Caco-2 (cell line): ENCODE measurements at regions of chr17 and their contacts with region 1.

Region 1: DNA sequence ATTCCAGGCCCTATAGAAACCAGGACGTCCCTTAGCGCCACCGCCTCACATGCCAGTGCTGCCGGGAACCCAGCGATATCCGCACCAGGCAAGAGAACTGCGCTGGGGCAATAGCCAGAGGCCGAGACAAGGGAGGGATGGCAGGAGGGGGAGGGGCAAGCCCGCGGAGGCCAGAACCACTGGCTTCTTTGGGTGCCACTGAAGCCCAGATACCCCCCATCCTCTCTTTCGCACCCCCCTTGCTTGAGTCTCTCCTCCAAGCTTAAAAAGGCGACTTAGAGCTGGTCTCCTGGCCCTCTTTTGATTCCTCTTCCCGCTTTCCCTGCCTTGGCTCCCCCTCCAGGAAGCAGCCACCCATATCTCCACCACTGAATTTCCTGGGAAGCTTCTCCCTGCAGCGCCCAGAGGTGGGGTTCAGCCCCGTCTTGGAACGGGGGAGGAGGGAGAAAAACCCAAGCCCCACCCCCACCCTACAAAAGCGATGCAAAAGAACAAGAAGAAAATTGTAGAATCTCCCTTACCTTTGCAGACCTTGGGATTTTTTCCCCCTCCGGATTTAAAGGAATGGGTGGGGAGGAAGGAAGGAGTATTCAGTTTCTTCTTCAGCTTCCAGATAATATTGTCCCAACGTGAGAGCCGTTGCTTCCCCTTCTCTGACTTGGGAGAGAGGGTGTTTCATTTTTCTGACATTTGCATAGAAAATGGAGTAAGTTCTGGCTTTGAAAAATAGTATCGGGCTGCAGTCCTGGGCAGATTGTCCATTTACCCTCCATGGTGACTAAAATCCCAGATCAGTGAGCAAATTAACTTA is 622 bp downstream of the HOXB6 start:
- DNase-seq: no peak
- H3K4me3 ChIP-seq: no peak overlapping the region
- H3K4me3 Mint-ChIP-seq: no peak overlapping the region
- H3K27ac Mint-ChIP-seq: no peak overlapping the region
- H3K4me1 ChIP-seq: peaks cover 35% of the 10 kb centered on the region
- H3K4me1 Mint-ChIP-seq: peaks cover 35% of the 10 kb centered on the region
- H3K27me3 ChIP-seq: no peaks in the 10 kb centered on the region; the same call in 1 of the 2 replicates
- H3K27me3 Mint-ChIP-seq: peaks cover 12% of the 10 kb centered on the region
- CTCF ChIP-seq: no peak

Region 2: GRCh38 chr17:48543107-48543853 is 60.9 kb before region 1 on chr17:
- CTCF ChIA-PET with region 1: interaction called, 17 read pairs
- POLR2A ChIA-PET with region 1: no interaction called
- intact Hi-C with region 1: no loop called
- DNase-seq: peak; percentile 92
- H3K4me3 ChIP-seq: peak overlapping the region; percentile 55
- H3K4me3 Mint-ChIP-seq: peak overlapping the region; percentile 78
- H3K27ac Mint-ChIP-seq: peak overlapping the region; percentile 31
- H3K4me1 ChIP-seq: peaks cover 10% of the 10 kb centered on the region; the same call in 1 of the 2 replicates
- H3K4me1 Mint-ChIP-seq: peaks cover 11% of the 10 kb centered on the region
- H3K27me3 ChIP-seq: no peaks in the 10 kb centered on the region
- H3K27me3 Mint-ChIP-seq: peaks cover 8% of the 10 kb centered on the region
- CTCF ChIP-seq: peak; percentile 68 to 70

Region 3: DNA sequence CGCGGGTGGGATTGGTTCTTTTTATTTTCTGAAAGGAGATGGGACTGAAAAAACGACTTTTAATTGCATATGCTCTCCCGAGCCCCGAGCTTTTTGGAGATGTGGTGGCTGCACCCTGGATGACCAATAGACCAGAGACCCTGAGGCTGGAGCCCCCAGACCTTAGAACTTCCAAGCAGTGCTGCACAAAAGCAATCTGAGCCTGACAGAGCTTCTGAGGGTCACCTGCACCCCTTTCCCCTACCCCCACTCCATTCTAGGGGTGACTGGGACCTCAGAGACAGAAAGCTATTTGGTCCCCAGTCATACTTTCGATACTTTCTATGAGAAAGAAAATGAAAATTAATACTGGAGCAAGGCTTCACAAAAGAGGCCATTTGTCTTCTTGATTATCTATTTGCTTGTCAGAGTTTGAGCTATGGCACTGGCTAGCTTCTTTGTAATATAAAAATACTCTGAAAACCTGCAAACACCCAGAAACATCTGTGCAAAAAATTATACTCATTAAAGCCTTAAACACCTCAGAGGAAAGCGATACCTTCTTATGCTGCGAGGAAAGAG is 29.6 kb before region 1 on chr17:
- CTCF ChIA-PET with region 1: interaction called, 11 read pairs
- POLR2A ChIA-PET with region 1: no interaction called
- intact Hi-C with region 1: no loop called
- DNase-seq: no peak
- H3K4me3 ChIP-seq: no peak overlapping the region
- H3K4me3 Mint-ChIP-seq: no peak overlapping the region
- H3K27ac Mint-ChIP-seq: no peak overlapping the region
- H3K4me1 ChIP-seq: peaks cover 29% of the 10 kb centered on the region
- H3K4me1 Mint-ChIP-seq: peaks cover 9% of the 10 kb centered on the region
- H3K27me3 ChIP-seq: peaks cover 2% of the 10 kb centered on the region; the same call in 1 of the 2 replicates
- H3K27me3 Mint-ChIP-seq: peaks cover 9% of the 10 kb centered on the region
- CTCF ChIP-seq: no peak

Region 4: DNA sequence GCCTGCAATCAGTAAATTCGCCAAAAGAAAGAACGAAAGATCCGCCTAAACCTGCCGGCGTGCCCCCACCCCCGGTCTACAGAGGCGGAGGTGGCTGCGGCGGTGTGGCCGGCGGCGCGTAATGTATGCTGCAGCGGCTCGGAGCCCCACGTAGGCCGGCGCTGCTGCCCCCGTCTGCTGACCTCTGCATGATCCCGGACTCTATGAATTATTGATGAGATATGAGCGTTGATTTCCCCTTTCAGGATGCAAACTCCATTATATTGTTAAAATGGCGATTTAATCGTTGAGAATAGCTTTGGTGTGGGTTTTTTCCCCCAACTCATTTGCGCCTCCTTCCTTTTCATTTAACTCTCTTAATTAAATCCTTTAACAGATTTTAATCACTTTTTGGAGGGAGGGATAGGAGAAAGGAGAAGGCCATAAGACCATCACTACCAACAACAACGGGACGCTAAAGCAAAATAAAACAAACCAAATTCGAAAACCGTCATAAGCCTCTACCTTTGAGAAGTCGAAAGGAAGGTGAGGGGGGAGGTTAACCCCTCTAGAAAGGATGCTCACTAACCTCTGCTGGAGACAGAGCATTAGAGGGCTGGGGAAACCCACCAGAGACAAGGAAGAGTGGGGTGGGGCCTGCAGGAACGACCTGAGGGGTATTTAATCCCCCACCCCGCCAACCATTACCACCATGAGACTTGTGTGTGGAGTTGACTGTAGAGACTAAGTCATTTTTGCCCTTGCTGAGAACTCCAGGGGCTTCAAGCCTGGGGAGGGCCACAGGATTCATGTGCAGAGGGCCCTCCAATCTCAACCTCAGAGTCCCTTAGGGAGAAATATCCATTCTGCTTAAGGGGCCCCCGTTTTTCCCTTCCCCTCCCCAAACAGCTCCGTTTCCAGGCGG is 17.6 kb before region 1 on chr17:
- CTCF ChIA-PET with region 1: interaction called, 13 read pairs
- POLR2A ChIA-PET with region 1: no interaction called
- intact Hi-C with region 1: no loop called
- DNase-seq: no peak
- H3K4me3 ChIP-seq: no peak overlapping the region
- H3K4me3 Mint-ChIP-seq: no peak overlapping the region
- H3K27ac Mint-ChIP-seq: no peak overlapping the region
- H3K4me1 ChIP-seq: peaks cover 21% of the 10 kb centered on the region
- H3K4me1 Mint-ChIP-seq: peaks cover 22% of the 10 kb centered on the region
- H3K27me3 ChIP-seq: peaks cover 12% of the 10 kb centered on the region
- H3K27me3 Mint-ChIP-seq: peaks cover 37% of the 10 kb centered on the region
- CTCF ChIP-seq: no peak

Region 5: GRCh38 chr17:48618256-48618897 is 14.2 kb after region 1 on chr17:
- CTCF ChIA-PET with region 1: interaction called, 28 read pairs
- POLR2A ChIA-PET with region 1: no interaction called
- intact Hi-C with region 1: no loop called
- DNase-seq: peak; percentile 93 to 98
- H3K4me3 ChIP-seq: peak overlapping the region; percentile 33
- H3K4me3 Mint-ChIP-seq: peak overlapping the region; percentile 63
- H3K27ac Mint-ChIP-seq: peak overlapping the region; percentile 59
- H3K4me1 ChIP-seq: peaks cover 4% of the 10 kb centered on the region
- H3K4me1 Mint-ChIP-seq: peaks cover 33% of the 10 kb centered on the region
- H3K27me3 ChIP-seq: peaks cover 27% of the 10 kb centered on the region
- H3K27me3 Mint-ChIP-seq: peaks cover 69% of the 10 kb centered on the region
- CTCF ChIP-seq: peak; percentile 100

Region 6: GRCh38 chr17:48625495-48626244 is 21.5 kb after region 1 on chr17:
- CTCF ChIA-PET with region 1: interaction called, 10 read pairs
- POLR2A ChIA-PET with region 1: no interaction called
- intact Hi-C with region 1: no loop called
- DNase-seq: peak; percentile 90 to 92
- H3K4me3 ChIP-seq: peak overlapping the region; percentile 57
- H3K4me3 Mint-ChIP-seq: peak overlapping the region; percentile 85
- H3K27ac Mint-ChIP-seq: peak overlapping the region; percentile 33
- H3K4me1 ChIP-seq: peaks cover 13% of the 10 kb centered on the region
- H3K4me1 Mint-ChIP-seq: peaks cover 8% of the 10 kb centered on the region
- H3K27me3 ChIP-seq: peaks cover 30% of the 10 kb centered on the region
- H3K27me3 Mint-ChIP-seq: peaks cover 56% of the 10 kb centered on the region
- CTCF ChIP-seq: peak in 1 of 2 experiments; percentile 0

Region 7: GRCh38 chr17:48663134-48663924 is 59.2 kb after region 1 on chr17:
- CTCF ChIA-PET with region 1: no interaction called
- POLR2A ChIA-PET with region 1: no interaction called
- intact Hi-C with region 1: no loop called
- DNase-seq: peak; percentile 38 to 39
- H3K4me3 ChIP-seq: no peak overlapping the region
- H3K4me3 Mint-ChIP-seq: no peak overlapping the region
- H3K27ac Mint-ChIP-seq: no peak overlapping the region
- H3K4me1 ChIP-seq: no peaks in the 10 kb centered on the region
- H3K4me1 Mint-ChIP-seq: no peaks in the 10 kb centered on the region
- H3K27me3 ChIP-seq: no peaks in the 10 kb centered on the region; the same call in 1 of the 2 replicates
- H3K27me3 Mint-ChIP-seq: no peaks in the 10 kb centered on the region
- CTCF ChIP-seq: peak; percentile 36 to 49